ENCODE measurements at regions of chr1 and their contacts with region 1.

Region 1: DNA sequence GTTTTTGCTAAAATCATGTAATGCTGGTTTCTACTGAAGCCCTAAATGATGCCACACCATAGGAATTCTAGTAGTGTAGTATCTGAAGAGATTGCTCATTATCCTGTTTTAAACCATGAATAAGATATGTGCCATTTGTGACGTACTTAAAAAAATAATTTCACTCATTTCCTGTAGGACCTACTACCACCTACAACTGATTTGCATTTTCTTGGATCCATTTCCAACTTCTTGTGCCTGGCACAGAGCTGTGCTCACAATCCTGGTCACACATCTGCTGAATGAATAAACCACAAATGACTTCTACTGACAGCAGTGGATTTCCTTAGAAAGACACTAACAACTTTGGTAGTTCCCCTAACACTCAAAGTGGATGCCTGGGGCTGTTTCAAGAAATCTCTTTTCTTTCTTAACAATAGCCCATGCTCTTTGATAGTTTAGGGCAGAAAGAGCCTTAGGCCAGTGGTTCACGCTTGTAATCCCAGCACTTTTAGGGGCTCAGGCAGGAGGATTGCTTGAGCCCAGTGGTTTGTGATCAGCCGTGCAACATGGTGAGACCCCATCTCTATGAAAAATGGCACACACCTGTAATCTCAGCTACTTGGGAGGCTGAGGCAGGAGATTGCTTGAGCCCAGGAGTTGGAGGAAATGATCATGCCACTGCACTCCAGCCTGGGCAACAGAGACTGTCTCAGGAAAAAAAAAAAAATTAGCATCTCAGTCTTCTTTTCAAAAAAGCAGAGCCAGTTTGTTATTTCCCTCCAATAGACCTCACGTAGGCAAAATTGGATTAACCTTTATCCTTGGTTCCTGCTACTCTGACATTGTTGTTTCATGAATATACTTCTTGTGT is 13.0 kb upstream of the BATF3 start:
- DNase-seq: peak; percentile 19
- ATAC-seq: peak; percentile 91
- H3K4me3 Mint-ChIP-seq: no peak overlapping the region
- H3K27ac Mint-ChIP-seq: peak overlapping the region; percentile 76
- H3K4me1 Mint-ChIP-seq: peaks cover 21% of the 10 kb centered on the region
- H3K27me3 Mint-ChIP-seq: peaks cover 13% of the 10 kb centered on the region
- CTCF ChIP-seq: no peak

Region 2: DNA sequence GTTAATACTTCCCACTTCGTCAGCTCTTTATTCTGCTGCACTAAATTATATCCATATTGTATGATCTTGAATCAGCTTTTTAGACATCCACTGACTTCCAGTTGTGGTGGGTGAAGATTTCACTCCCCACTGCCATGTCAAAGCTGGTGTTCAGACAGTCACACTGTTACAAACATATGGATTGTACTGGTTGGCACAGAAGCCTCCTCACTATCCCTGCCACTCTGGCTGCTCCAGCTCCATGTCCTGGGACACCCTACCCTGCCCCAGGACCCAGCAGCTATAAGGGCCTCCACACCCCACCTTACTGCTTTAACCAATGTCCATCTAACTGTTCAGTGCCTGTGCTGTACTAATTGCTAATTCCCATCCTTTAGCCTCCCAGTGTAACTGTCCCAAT is 19.0 kb after region 1 on chr1:
- CTCF ChIA-PET with region 1: interaction called, 3 read pairs
- POLR2A ChIA-PET with region 1: no interaction called
- intact Hi-C with region 1: loop called (anchors 2 kb)
- DNase-seq: no peak
- ATAC-seq: no peak
- H3K4me3 Mint-ChIP-seq: no peak overlapping the region
- H3K27ac Mint-ChIP-seq: no peak overlapping the region
- H3K4me1 Mint-ChIP-seq: peaks cover 22% of the 10 kb centered on the region
- H3K27me3 Mint-ChIP-seq: no peaks in the 10 kb centered on the region
- CTCF ChIP-seq: no peak

Region 3: GRCh38 chr1:212853658-212854057 is 141.0 kb after region 1 on chr1:
- CTCF ChIA-PET with region 1: no interaction called
- POLR2A ChIA-PET with region 1: no interaction called
- intact Hi-C with region 1: no loop called
- DNase-seq: no peak
- ATAC-seq: no peak
- H3K4me3 Mint-ChIP-seq: no peak overlapping the region
- H3K27ac Mint-ChIP-seq: no peak overlapping the region
- H3K4me1 Mint-ChIP-seq: peaks cover 8% of the 10 kb centered on the region
- H3K27me3 Mint-ChIP-seq: no peaks in the 10 kb centered on the region
- CTCF ChIP-seq: no peak

Measured in activated CD8-positive, alpha-beta T cell treated with anti-CD3 and anti-CD28 coated beads for 36 hours (primary cell).